ENCODE measurements at regions of chr1 and their contacts with region 1.

Region 1: DNA sequence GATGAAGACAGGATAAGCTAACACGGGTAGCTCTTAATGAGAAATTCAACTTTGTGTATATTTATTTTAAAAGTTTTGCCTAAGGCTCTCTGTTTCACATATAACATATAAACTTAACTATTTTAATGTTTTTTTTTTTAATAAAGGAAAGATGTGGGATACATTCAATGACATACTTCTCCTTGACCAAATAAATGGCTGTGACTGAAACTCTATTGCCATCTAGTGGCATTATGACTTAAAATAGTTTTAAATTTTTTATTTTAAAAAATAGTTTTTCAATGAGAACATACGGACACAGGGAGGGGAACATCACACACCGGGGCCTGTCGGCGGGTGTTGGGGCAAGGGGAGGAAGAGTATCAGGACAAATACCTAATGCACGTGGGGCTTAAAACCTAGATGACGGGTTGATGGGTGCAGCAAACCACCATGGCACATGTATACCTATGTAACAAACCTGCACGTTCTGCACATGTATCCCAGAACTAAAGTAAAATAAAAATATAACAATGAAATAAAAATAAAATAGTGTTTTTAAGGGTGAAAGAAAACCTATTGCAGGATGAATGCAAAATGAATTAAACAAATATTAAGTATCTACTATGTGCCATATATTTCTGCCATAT is 83.4 kb downstream of the LYST start:
- DNase-seq: no peak
- ATAC-seq: no peak
- H3K4me3 Mint-ChIP-seq: no peak overlapping the region
- H3K27ac Mint-ChIP-seq: no peak overlapping the region
- H3K4me1 Mint-ChIP-seq: no peaks in the 10 kb centered on the region
- H3K27me3 Mint-ChIP-seq: no peaks in the 10 kb centered on the region

Region 2: DNA sequence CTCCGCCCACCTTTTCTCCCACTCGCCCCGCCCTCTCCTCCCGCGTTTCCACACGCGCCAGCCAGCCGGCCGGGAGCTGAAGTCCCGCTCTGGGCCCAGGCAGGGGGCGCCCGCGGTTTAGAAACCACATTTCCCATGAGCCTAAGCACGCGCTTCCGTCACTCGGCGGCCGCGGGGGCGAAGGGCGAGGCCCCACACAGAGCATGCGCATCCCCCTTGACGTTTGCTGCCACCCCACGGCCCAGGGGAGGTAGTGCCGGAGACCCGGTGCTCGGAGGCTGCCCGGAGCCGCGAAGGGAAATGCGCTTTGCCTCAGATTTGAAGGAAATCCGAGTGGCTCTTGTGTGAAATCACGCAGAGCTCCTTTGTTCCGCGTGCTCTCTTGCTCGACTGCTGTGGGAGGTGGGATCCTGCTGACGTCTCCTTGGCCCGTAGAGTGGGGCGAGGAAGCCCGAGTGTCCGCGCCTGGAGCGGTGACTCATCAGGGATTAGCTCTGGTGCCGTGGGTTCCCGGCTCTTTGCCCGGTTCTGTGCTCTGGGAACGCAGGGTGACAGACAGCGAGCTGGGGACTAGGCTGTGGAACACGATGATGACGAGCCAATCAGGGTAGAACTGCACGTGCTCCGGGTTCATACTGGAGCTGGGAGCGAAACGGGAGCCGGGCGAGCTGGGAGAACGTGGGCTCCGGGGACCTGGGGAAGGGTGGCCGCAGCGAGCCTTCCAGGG is 278.6 kb before region 1 on chr1:
- CTCF ChIA-PET with region 1: interaction called, 11 read pairs
- POLR2A ChIA-PET with region 1: no interaction called
- DNase-seq: peak; percentile 99
- ATAC-seq: peak; percentile 86
- H3K4me3 Mint-ChIP-seq: peak overlapping the region; percentile 90
- H3K27ac Mint-ChIP-seq: peak overlapping the region; percentile 97
- H3K4me1 Mint-ChIP-seq: peaks cover 19% of the 10 kb centered on the region
- H3K27me3 Mint-ChIP-seq: peaks cover 3% of the 10 kb centered on the region

Region 3: DNA sequence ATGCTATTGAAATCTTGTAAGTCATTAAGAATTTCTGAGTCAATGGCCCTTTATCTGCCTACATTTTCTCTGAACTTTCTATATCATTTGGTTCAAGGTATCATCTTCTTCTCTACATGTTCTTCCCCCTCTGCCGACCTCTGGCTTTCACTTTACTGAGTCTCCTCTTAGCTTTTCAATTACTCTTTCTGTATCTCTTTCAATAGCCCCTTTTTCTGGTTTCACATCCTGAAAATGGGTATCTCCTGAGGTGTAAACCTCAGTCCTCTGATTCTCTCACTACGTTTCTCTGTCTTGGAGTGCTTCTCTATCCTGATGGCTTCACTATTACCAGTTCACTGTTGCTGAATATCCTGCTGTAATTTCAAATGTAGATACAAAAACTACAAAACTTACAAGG is 15.5 kb before region 1 on chr1:
- CTCF ChIA-PET with region 1: interaction called, 13 read pairs
- POLR2A ChIA-PET with region 1: no interaction called
- DNase-seq: no peak
- ATAC-seq: no peak
- H3K4me3 Mint-ChIP-seq: no peak overlapping the region
- H3K27ac Mint-ChIP-seq: no peak overlapping the region
- H3K4me1 Mint-ChIP-seq: peaks cover 9% of the 10 kb centered on the region
- H3K27me3 Mint-ChIP-seq: no peaks in the 10 kb centered on the region

Region 4: GRCh38 chr1:235843461-235843961 is 60.2 kb after region 1 on chr1:
- CTCF ChIA-PET with region 1: interaction called, 31 read pairs
- POLR2A ChIA-PET with region 1: no interaction called
- DNase-seq: no peak
- ATAC-seq: peak; percentile 65
- H3K4me3 Mint-ChIP-seq: no peak overlapping the region
- H3K27ac Mint-ChIP-seq: no peak overlapping the region
- H3K4me1 Mint-ChIP-seq: peaks cover 57% of the 10 kb centered on the region
- H3K27me3 Mint-ChIP-seq: no peaks in the 10 kb centered on the region